ENCODE measurements at regions of chr1 and their contacts with region 1.

Region 1: GRCh38 chr1:25805863-25806225 is 5.9 kb downstream of the SELENON start:
- DNase-seq: no peak

Region 2: DNA sequence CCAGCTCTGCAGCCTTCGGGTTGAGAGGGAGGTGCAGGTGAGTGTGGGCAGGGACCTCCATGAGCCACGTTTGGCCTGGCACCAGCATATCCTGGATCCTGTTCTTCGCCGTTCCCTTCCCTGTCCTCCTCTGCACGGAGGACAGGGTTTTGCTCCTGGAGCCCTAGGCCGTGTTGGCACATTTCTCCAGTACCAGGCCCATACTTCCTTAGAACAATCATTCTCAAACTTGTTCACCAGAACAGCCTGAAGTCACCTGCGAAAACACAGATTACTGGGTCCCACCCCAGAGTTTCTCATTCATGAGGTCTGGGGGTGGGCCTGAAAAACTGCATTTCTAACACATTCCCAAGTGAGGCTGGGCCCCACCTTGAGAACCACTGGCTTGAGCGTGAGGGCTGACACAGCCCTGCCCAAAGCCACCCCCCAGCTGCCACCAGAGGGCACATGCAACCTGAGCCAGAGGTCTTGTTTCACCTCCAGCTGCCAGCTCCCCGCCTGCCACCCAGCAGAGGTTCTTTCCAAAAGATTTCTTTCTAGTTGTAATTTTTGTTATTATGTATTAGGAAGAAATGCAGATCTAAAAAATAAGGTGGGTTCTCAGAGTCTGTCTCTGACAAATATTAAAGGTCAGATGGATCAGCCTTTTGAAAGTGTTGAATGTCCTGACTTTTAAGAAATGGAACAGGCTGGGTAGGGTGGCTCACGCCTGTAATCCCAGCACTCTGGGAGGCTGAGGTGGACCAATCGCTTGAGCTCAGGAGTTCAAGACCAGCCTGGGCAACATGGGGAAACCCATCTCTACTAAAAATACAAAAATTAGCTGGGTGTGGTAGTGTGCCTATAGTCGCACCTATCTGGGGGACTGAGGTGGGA is 302.1 kb before region 1 on chr1:
- intact Hi-C with region 1: loop called (anchors 5 kb)
- DNase-seq: no peak

Region 3: GRCh38 chr1:25794325-25794724 is 11.5 kb before region 1 on chr1:
- intact Hi-C with region 1: no loop called
- DNase-seq: no peak

Measured in cardiac septum (tissue), 1 donor.